ENCODE measurements at regions of chr9 and their contacts with region 1.

Region 1: GRCh38 chr9:114291064-114291474 is 31.8 kb upstream of the ORM1 start:
- DNase-seq: peak; percentile 81
- H3K4me3 ChIP-seq: peak overlapping the region in 1 of 2 experiments; percentile 42; a peak in 1 of 4 replicates
- H3K27ac ChIP-seq: no peak overlapping the region
- H3K4me1 ChIP-seq: peaks cover 12 to 17% of the 10 kb centered on the region in 2 experiments; a peak in 2 of 4 replicates
- H3K27me3 ChIP-seq: no peaks in the 10 kb centered on the region
- CTCF ChIP-seq: peak; percentile 88
- EP300 ChIP-seq: no peak
- RAD21 ChIP-seq: peak; percentile 92

Region 2: GRCh38 chr9:114082017-114082762 is 208.9 kb before region 1 on chr9:
- CTCF ChIA-PET with region 1: interaction called, 133 read pairs
- POLR2A ChIA-PET with region 1: no interaction called
- DNase-seq: peak; percentile 86
- H3K4me3 ChIP-seq: no peak overlapping the region; a peak in 1 of 4 replicates
- H3K27ac ChIP-seq: no peak overlapping the region
- H3K4me1 ChIP-seq: no peaks in the 10 kb centered on the region; a peak in 1 of 4 replicates
- H3K27me3 ChIP-seq: no peaks in the 10 kb centered on the region; the same call in 1 of the 2 replicates
- CTCF ChIP-seq: peak; percentile 89
- EP300 ChIP-seq: no peak
- RAD21 ChIP-seq: peak; percentile 92

Region 3: DNA sequence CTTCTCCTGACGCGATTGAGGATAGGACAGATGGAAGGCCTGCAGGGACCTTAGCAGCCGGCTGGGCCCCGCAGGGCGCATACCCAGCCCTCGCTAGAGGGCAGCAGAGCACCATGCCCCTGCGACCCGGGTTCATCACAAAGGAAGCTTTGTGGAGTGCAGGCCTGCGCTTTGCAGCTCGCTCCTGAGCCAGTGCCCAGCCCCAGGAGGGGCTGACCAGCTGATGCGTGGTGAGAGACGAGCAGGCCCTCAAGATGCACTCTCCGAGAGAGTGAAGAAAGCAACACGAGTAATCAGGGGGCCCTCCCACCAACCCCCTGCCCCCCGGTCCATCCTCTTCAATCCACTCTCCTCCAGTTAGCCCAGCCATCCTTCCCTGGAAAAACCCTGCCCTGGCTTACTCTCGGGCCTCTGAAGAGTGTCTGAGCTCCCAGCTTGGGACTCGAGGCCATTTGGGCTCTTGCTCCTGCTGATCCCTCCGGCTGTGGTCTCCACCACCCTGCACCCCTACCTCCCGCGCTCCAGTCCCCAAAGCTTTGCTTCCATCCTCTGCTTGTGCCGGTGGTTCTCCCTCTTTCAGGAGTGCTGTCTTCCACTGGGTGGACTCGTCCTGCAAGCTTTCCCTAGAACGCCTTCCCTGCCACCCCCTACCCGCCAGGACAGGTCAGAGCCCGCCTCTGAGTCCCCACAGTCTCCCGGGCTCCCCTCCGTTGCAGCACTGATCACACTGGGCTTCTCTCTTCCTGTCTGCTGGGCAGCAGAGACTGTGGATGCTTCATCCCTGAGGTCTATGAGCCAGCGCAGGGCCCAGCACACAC is 182.8 kb before region 1 on chr9:
- CTCF ChIA-PET with region 1: interaction called, 269 read pairs
- POLR2A ChIA-PET with region 1: no interaction called
- DNase-seq: peak; percentile 88
- H3K4me3 ChIP-seq: no peak overlapping the region; a peak in 1 of 4 replicates
- H3K27ac ChIP-seq: no peak overlapping the region
- H3K4me1 ChIP-seq: no peaks in the 10 kb centered on the region; a peak in 1 of 4 replicates
- H3K27me3 ChIP-seq: no peaks in the 10 kb centered on the region; the same call in 1 of the 2 replicates
- CTCF ChIP-seq: peak; percentile 82
- EP300 ChIP-seq: no peak
- RAD21 ChIP-seq: peak; percentile 92

Region 4: GRCh38 chr9:114141553-114142402 is 149.3 kb before region 1 on chr9:
- CTCF ChIA-PET with region 1: interaction called, 31 read pairs
- POLR2A ChIA-PET with region 1: no interaction called
- DNase-seq: no peak
- H3K4me3 ChIP-seq: no peak overlapping the region
- H3K27ac ChIP-seq: no peak overlapping the region
- H3K4me1 ChIP-seq: no peaks in the 10 kb centered on the region
- H3K27me3 ChIP-seq: peaks cover 50% of the 10 kb centered on the region
- CTCF ChIP-seq: no peak
- EP300 ChIP-seq: no peak
- RAD21 ChIP-seq: no peak

Region 5: GRCh38 chr9:114233491-114234185 is 57.4 kb before region 1 on chr9:
- CTCF ChIA-PET with region 1: interaction called, 137 read pairs
- POLR2A ChIA-PET with region 1: no interaction called
- DNase-seq: no peak
- H3K4me3 ChIP-seq: no peak overlapping the region
- H3K27ac ChIP-seq: no peak overlapping the region
- H3K4me1 ChIP-seq: peaks cover 0 to 47% of the 10 kb centered on the region in 2 experiments; a peak in 2 of 4 replicates
- H3K27me3 ChIP-seq: no peaks in the 10 kb centered on the region
- CTCF ChIP-seq: no peak
- EP300 ChIP-seq: no peak
- RAD21 ChIP-seq: no peak

Region 6: DNA sequence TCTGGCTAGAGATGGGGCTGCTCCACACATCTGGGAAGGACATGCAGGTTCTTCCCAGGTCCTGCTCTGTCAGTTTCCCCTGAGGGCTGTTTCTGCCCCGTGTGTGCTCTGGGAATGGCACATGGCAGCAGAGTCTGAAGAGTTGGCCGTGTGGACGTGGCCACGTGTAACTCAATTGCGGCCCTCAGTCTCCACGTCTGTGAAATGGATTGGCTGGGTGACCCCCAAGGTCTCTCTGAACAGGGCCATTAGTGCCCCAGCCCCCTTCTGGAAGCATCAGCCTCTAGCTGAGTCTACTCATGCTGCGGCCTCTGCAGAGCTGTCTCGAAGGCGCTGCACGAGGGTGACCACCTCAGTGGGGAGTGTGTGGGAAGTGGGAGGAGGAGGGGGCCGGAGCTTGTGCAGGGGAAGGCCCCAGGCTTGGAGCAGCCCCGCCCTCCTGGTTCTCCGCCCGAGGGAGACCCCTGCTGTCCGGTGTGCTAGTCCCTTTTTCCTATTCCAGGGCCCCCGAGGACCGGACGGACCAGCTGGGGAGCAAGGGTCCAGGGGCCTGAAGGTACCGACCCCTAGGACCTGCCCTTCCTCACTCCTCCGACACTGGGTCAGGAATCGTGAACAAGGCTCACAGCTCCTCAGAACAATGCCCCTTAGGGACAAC is 27.1 kb before region 1 on chr9:
- CTCF ChIA-PET with region 1: interaction called, 85 read pairs
- POLR2A ChIA-PET with region 1: no interaction called
- DNase-seq: no peak
- H3K4me3 ChIP-seq: no peak overlapping the region
- H3K27ac ChIP-seq: no peak overlapping the region
- H3K4me1 ChIP-seq: peaks cover 0 to 19% of the 10 kb centered on the region in 2 experiments; a peak in 1 of 4 replicates
- H3K27me3 ChIP-seq: no peaks in the 10 kb centered on the region
- CTCF ChIP-seq: no peak
- EP300 ChIP-seq: no peak
- RAD21 ChIP-seq: peak; percentile 28; the same call in 1 of the 2 replicates

Region 7: GRCh38 chr9:114364134-114365041 is 73.3 kb after region 1 on chr9:
- CTCF ChIA-PET with region 1: no interaction called
- POLR2A ChIA-PET with region 1: no interaction called
- DNase-seq: no peak
- H3K4me3 ChIP-seq: no peak overlapping the region
- H3K27ac ChIP-seq: peak overlapping the region in 1 of 2 experiments; percentile 42; a peak in 2 of 4 replicates
- H3K4me1 ChIP-seq: peaks cover 0 to 5% of the 10 kb centered on the region in 2 experiments; a peak in 1 of 4 replicates
- H3K27me3 ChIP-seq: no peaks in the 10 kb centered on the region
- CTCF ChIP-seq: no peak
- EP300 ChIP-seq: no peak
- RAD21 ChIP-seq: no peak